Caco-2 (cell line): ENCODE measurements at regions of chr14 and their contacts with region 1.

Region 1: GRCh38 chr14:68918612-68919011 is 60.5 kb downstream of the ACTN1 start:
- DNase-seq: no peak
- H3K4me3 ChIP-seq: no peak overlapping the region
- H3K4me3 Mint-ChIP-seq: no peak overlapping the region
- H3K27ac Mint-ChIP-seq: no peak overlapping the region
- H3K4me1 ChIP-seq: no peaks in the 10 kb centered on the region
- H3K4me1 Mint-ChIP-seq: peaks cover 7% of the 10 kb centered on the region
- H3K27me3 ChIP-seq: no peaks in the 10 kb centered on the region
- H3K27me3 Mint-ChIP-seq: no peaks in the 10 kb centered on the region
- CTCF ChIP-seq: no peak

Region 2: DNA sequence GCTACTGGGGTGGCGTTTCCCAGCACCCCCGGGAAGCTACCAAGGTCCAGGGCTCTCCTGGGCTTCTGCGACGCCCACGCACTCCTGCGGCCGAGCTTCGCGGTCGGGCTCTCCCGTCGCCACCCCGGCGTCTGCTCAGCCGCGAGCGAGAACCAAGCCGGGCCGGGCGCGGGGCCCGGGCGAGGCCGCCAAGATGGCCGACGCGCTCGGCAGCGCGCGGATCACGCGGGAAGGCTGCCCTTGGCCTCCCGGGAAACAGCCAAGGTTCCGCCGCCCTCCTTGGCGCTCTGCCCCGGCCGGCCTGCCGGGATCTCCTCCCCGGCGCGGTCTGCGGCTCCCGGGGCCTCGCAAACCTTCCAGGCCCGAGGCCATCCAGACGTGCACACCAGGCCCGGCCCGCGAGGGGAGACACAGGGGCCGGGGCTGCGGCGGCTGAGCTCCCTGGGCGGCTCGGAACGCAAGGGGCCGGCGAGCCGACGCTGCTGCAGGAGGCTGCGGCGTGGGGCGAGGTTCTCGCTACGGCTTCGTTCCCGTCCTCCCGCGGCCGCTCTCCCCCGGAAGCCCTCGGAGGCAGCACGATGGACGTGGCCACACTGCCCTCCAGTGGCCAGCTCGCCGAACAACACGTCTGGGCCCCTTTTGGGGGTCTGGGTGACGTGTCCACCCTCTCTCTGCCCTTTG is 102.2 kb before region 1 on chr14:
- CTCF ChIA-PET with region 1: no interaction called
- POLR2A ChIA-PET with region 1: no interaction called
- intact Hi-C with region 1: no loop called
- DNase-seq: peak; percentile 89 to 94
- H3K4me3 ChIP-seq: peak overlapping the region; percentile 53
- H3K4me3 Mint-ChIP-seq: peak overlapping the region; percentile 77
- H3K27ac Mint-ChIP-seq: peak overlapping the region; percentile 90
- H3K4me1 ChIP-seq: peaks cover 27% of the 10 kb centered on the region
- H3K4me1 Mint-ChIP-seq: peaks cover 18% of the 10 kb centered on the region
- H3K27me3 ChIP-seq: no peaks in the 10 kb centered on the region
- H3K27me3 Mint-ChIP-seq: no peaks in the 10 kb centered on the region
- CTCF ChIP-seq: peak; percentile 88 to 97

Region 3: GRCh38 chr14:68968051-68968450 is 49.4 kb after region 1 on chr14:
- CTCF ChIA-PET with region 1: no interaction called
- POLR2A ChIA-PET with region 1: no interaction called
- intact Hi-C with region 1: no loop called
- DNase-seq: no peak
- H3K4me3 ChIP-seq: no peak overlapping the region
- H3K4me3 Mint-ChIP-seq: no peak overlapping the region
- H3K27ac Mint-ChIP-seq: peak overlapping the region; percentile 42
- H3K4me1 ChIP-seq: peaks cover 67% of the 10 kb centered on the region
- H3K4me1 Mint-ChIP-seq: peaks cover 52% of the 10 kb centered on the region
- H3K27me3 ChIP-seq: no peaks in the 10 kb centered on the region
- H3K27me3 Mint-ChIP-seq: no peaks in the 10 kb centered on the region
- CTCF ChIP-seq: no peak

Region 4: DNA sequence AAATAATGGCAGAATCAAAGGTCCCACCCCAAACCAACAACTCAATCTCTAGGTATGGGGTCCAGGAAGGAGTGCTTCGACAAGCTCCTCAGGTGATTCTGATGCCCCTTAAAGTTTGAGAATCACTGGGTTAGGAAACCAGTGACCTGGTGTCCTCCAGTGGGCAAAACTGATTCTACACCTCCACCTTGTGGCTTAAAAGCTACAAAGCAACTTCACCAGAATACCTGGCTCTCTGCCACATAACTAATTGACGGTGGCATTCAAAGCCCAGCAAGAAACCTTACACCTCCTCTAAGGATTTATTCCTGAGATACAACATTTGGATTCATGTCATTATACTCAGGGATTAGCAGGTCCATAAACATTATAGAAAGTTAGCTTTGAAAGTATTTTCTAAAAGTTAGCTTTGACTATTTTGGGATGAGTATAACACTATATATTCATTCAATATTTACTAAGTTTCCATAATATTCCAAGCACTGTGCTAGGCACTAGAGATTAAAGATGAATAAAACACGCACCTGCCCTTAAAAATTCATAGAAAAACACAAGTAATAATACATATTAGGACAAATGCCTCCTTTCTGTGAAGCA is 188.9 kb after region 1 on chr14:
- CTCF ChIA-PET with region 1: no interaction called
- POLR2A ChIA-PET with region 1: no interaction called
- intact Hi-C with region 1: loop called (anchors 2 kb)
- DNase-seq: peak; percentile 50 to 68
- H3K4me3 ChIP-seq: no peak overlapping the region
- H3K4me3 Mint-ChIP-seq: no peak overlapping the region
- H3K27ac Mint-ChIP-seq: no peak overlapping the region
- H3K4me1 ChIP-seq: no peaks in the 10 kb centered on the region
- H3K4me1 Mint-ChIP-seq: no peaks in the 10 kb centered on the region
- H3K27me3 ChIP-seq: no peaks in the 10 kb centered on the region
- H3K27me3 Mint-ChIP-seq: no peaks in the 10 kb centered on the region
- CTCF ChIP-seq: peak; percentile 64 to 74

Region 5: DNA sequence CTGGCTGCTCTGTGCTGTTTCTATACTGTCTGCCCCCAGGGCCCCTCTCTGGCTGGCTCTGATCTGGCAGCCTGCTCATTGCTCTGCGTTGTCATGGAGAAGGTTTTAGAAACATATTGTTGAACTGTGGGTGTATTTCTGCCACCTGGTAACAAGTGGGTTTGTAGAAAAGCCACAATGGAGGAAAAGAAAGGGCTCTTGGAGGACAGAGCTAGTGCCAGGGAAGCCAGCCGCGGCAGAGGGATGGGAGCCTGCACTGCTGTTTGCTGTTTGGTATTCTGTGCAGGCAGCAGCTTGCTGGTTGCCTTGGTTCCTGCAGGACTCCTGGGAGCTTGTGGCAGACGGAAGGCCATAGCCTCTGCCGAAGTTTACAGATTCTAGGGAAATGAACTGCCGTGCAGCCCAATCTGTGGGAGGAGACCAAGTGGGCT is 641.0 kb after region 1 on chr14:
- CTCF ChIA-PET with region 1: no interaction called
- POLR2A ChIA-PET with region 1: no interaction called
- intact Hi-C with region 1: no loop called
- DNase-seq: no peak
- H3K4me3 ChIP-seq: no peak overlapping the region
- H3K4me3 Mint-ChIP-seq: no peak overlapping the region
- H3K27ac Mint-ChIP-seq: no peak overlapping the region
- H3K4me1 ChIP-seq: no peaks in the 10 kb centered on the region
- H3K4me1 Mint-ChIP-seq: no peaks in the 10 kb centered on the region
- H3K27me3 ChIP-seq: no peaks in the 10 kb centered on the region
- H3K27me3 Mint-ChIP-seq: peaks cover 15% of the 10 kb centered on the region
- CTCF ChIP-seq: no peak